Tibial artery (tissue), 4 donors: ENCODE measurements at regions of chr12 and their contacts with region 1.

Region 1: DNA sequence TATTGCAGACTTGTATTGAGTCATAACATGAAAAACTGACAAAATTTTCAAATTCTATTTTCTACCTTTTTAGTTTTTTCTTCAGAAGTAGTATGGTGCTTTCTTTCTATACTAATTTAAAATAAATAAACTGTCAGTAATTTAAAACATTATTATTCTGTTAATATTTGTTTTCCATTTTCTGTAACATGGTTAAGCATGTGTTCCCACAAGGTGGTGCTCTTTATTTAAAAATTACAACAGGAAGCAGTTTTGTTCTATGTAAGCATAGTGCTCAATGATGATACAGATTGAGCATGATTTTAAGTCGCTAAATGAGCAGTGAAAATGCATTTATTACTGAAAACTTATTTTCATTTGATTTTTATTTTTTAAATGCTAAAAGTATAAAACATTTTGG is 114.6 kb downstream of the PPFIA2 start:
- DNase-seq: no peak
- H3K4me3 ChIP-seq: no peak overlapping the region
- H3K27ac ChIP-seq: no peak overlapping the region
- H3K4me1 ChIP-seq: no peaks in the 10 kb centered on the region
- H3K27me3 ChIP-seq: no peaks in the 10 kb centered on the region
- CTCF ChIP-seq: peak; percentile 60 to 64

Region 2: DNA sequence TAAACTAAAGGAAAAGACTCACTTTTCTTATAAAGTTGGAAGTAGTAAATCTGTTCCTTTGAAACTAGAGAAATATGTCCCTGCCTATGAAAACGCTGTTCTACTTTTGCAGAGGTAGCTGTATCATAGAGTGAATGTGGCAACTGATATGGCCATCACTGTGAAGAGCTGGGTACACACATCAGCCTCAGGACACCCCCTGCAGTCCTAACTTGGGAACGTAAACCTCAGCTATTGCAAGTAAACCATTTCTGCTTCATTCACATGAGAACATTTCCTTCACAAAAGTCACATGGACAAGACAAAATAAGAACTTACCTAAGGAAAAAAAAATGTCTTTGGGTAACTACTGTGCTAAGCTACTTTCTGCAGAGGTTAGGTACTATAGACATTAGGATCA is 348.0 kb after region 1 on chr12:
- intact Hi-C with region 1: loop called (anchors 10 kb)
- DNase-seq: peak in 1 of 2 donors; percentile 30
- H3K4me3 ChIP-seq: no peak overlapping the region
- H3K27ac ChIP-seq: no peak overlapping the region
- H3K4me1 ChIP-seq: no peaks in the 10 kb centered on the region
- H3K27me3 ChIP-seq: no peaks in the 10 kb centered on the region
- CTCF ChIP-seq: peak; percentile 49 to 69